Common myeloid progenitor, CD34-positive (primary cell): ENCODE measurements at regions of chr2 and their contacts with region 1.

Region 1: GRCh38 chr2:219459460-219460311 is 25.0 kb downstream of the SPEG start:
- DNase-seq: peak in 2 of 3 donors; percentile 15 to 21
- H3K4me3 ChIP-seq: no peak overlapping the region
- H3K27ac ChIP-seq: no peak overlapping the region
- H3K4me1 ChIP-seq: peaks cover 0 to 26% (median 7%) of the 10 kb centered on the region in 4 experiments
- H3K27me3 ChIP-seq: no peaks in the 10 kb centered on the region

Region 2: GRCh38 chr2:219402665-219403515 is 56.8 kb before region 1 on chr2:
- CTCF ChIA-PET with region 1: interaction called, 12 read pairs
- POLR2A ChIA-PET with region 1: no interaction called
- DNase-seq: peak; percentile 69 to 85 (median 80)
- H3K4me3 ChIP-seq: no peak overlapping the region
- H3K27ac ChIP-seq: no peak overlapping the region
- H3K4me1 ChIP-seq: no peaks in the 10 kb centered on the region
- H3K27me3 ChIP-seq: peaks cover 0 to 7% (median 0%) of the 10 kb centered on the region in 5 experiments

Region 3: GRCh38 chr2:219430633-219431615 is 28.8 kb before region 1 on chr2:
- CTCF ChIA-PET with region 1: interaction called, 14 read pairs
- POLR2A ChIA-PET with region 1: no interaction called
- DNase-seq: peak in 2 of 3 donors; percentile 32 to 38
- H3K4me3 ChIP-seq: no peak overlapping the region
- H3K27ac ChIP-seq: no peak overlapping the region
- H3K4me1 ChIP-seq: peaks cover 0 to 9% (median 6%) of the 10 kb centered on the region in 4 experiments
- H3K27me3 ChIP-seq: peaks cover 0 to 34% (median 24%) of the 10 kb centered on the region in 5 experiments

Region 4: GRCh38 chr2:219441451-219442255 is 18.0 kb before region 1 on chr2:
- CTCF ChIA-PET with region 1: interaction called, 14 read pairs
- POLR2A ChIA-PET with region 1: no interaction called
- DNase-seq: peak in 2 of 3 donors; percentile 38 to 48
- H3K4me3 ChIP-seq: peak overlapping the region in 5 of 7 experiments; percentile 30 to 77 (median 57)
- H3K27ac ChIP-seq: no peak overlapping the region
- H3K4me1 ChIP-seq: peaks cover 0 to 11% (median 7%) of the 10 kb centered on the region in 4 experiments
- H3K27me3 ChIP-seq: peaks cover 2 to 73% (median 22%) of the 10 kb centered on the region in 5 experiments

Region 5: DNA sequence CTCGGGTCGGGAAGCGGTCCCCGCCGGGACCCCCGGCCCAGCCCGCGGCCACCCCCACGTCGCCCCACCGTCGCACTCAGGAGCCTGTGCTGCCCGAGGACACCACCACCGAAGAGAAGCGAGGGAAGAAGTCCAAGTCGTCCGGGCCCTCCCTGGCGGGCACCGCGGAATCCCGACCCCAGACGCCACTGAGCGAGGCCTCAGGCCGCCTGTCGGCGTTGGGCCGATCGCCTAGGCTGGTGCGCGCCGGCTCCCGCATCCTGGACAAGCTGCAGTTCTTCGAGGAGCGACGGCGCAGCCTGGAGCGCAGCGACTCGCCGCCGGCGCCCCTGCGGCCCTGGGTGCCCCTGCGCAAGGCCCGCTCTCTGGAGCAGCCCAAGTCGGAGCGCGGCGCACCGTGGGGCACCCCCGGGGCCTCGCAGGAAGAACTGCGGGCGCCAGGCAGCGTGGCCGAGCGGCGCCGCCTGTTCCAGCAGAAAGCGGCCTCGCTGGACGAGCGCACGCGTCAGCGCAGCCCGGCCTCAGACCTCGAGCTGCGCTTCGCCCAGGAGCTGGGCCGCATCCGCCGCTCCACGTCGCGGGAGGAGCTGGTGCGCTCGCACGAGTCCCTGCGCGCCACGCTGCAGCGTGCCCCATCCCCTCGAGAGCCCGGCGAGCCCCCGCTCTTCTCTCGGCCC is 11.4 kb before region 1 on chr2:
- CTCF ChIA-PET with region 1: interaction called, 16 read pairs
- POLR2A ChIA-PET with region 1: no interaction called
- DNase-seq: peak; percentile 21 to 57 (median 37)
- H3K4me3 ChIP-seq: peak overlapping the region in 5 of 7 experiments; percentile 2 to 63 (median 48)
- H3K27ac ChIP-seq: no peak overlapping the region
- H3K4me1 ChIP-seq: peaks cover 0 to 19% (median 12%) of the 10 kb centered on the region in 4 experiments
- H3K27me3 ChIP-seq: peaks cover 0 to 72% (median 28%) of the 10 kb centered on the region in 5 experiments

Region 6: GRCh38 chr2:219475697-219476651 is 16.3 kb after region 1 on chr2:
- CTCF ChIA-PET with region 1: interaction called, 17 read pairs
- POLR2A ChIA-PET with region 1: no interaction called
- DNase-seq: peak; percentile 41 to 63 (median 59)
- H3K4me3 ChIP-seq: no peak overlapping the region
- H3K27ac ChIP-seq: no peak overlapping the region
- H3K4me1 ChIP-seq: peaks cover 0 to 2% (median 0%) of the 10 kb centered on the region in 4 experiments
- H3K27me3 ChIP-seq: peaks cover 0 to 17% (median 6%) of the 10 kb centered on the region in 5 experiments

Region 7: GRCh38 chr2:219530048-219530963 is 70.6 kb after region 1 on chr2:
- CTCF ChIA-PET with region 1: interaction called, 1,724 read pairs
- POLR2A ChIA-PET with region 1: no interaction called
- DNase-seq: peak; percentile 84 to 92 (median 89)
- H3K4me3 ChIP-seq: no peak overlapping the region
- H3K27ac ChIP-seq: no peak overlapping the region
- H3K4me1 ChIP-seq: peaks cover 0 to 7% (median 3%) of the 10 kb centered on the region in 4 experiments
- H3K27me3 ChIP-seq: peaks cover 4 to 71% (median 38%) of the 10 kb centered on the region in 5 experiments